ENCODE measurements at regions of chr7 and their contacts with region 1.

Region 1: GRCh38 chr7:135672560-135673359 is 10.4 kb downstream of the STMP1 start:
- DNase-seq: no peak
- ATAC-seq: peak; percentile 63

Region 2: DNA sequence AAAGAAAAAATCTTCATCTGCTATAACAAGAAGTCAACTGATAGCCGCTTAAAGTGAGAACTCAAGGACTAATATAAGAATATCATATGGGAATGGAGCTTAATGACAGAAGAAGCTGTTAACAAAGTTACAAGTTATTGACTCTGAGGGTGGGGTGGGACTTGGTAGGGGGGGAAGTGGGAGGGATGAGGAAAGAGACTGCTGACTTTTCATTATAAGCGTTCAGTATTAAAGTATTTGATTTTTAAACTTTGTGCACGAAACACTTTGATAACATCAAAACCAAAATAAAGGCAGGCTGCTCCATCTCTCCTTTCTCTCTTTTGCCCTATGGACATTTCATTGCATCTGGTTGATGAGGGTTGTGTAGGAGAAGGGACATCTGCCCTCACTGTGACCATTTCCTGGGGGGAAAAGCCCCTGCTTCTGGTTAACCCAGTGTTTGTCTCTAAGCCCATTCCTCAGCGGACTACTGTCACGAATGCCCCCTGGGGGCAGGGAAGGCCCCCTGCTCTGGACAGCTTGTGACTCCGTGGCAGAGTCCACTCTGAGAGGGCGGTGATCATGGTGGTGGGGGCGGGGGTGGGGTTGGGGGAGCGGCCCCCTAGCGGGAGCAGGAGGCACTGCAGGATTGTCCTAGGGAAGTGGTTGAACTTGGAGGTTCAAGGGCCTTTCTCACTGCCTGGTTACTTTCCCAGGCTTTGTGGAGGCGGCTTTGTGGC is 37.8 kb after region 1 on chr7:
- intact Hi-C with region 1: loop called (anchors 5 kb)
- DNase-seq: no peak
- ATAC-seq: no peak

Region 3: DNA sequence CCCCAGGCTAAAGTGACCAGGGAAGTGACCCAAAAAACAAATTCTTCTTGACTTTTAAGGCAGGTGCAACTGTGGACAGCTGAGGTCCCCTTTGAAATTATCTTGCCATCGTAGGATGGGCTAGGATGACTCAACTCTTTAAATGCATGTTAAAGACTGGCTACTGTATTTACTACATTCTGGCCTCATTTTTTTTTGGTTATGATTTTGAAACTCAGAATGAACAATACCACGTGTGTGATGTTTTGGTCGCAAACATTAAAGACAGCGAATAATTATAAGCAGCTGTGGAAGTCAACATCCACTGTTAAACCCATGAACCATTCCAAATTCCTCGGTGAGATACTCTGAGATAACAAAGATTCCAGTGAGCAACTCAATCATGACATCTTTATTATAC is 56.5 kb after region 1 on chr7:
- intact Hi-C with region 1: no loop called
- DNase-seq: no peak
- ATAC-seq: no peak

Region 4: GRCh38 chr7:135757719-135758411 is 85.1 kb after region 1 on chr7:
- intact Hi-C with region 1: loop called (anchors 5 kb)
- DNase-seq: no peak
- ATAC-seq: peak; percentile 43

Region 5: DNA sequence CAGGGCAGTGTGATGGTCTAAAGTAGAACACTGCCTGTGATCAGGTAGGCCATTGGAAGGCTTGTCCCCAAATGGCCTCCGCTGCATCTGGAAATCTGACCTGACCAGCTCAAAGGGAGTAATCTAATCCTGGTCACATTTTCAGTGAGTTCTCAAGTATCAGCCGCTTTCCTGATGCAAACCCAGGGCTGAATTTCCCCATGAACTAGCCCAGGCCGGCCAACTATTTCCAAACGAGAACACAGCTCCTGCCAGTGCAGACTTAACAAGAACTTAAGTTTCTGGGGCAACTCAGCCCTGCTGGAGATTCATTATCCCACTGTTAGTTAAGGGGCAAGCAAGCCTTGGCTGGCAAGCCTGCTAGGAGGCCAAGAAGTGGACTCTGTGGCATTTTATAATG is 135.4 kb after region 1 on chr7:
- intact Hi-C with region 1: no loop called
- DNase-seq: no peak
- ATAC-seq: no peak

Region 6: GRCh38 chr7:135950972-135951371 is 278.2 kb after region 1 on chr7:
- intact Hi-C with region 1: no loop called
- DNase-seq: no peak
- ATAC-seq: no peak